ENCODE measurements at regions of chr7 and their contacts with region 1.

Region 1: DNA sequence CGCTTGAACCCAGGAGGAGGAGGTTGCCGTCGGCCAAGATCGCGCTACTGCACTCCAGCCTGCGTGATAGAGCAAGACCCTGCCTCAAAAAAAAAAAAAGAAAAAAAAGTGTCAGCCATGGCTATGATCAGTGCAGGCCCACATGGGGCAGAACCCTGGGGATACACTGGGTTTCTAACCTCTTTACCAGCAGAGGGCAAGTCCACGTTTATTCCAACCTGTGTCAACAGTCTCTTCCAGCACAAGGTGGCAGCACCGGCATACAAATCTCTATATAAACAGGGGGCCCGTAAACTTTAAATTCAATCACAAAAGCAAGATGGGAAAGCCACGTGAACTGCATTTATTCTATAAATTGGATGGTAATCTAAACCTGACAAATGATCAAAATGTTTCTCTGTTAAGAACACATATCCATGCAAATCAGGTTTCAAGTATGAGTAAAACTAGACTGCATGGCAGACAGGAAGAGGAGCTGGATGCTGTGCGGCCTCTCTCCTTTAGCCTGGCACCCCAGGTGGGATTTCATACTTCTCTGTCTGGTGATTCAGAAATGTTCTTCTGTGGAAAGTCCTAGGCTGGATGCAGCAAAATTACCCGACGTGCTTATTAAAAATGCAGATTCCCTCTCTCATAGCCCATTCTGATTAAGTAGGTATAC is 60.0 kb upstream of the STEAP1B start:
- DNase-seq: peak; percentile 50 to 61
- ATAC-seq: peak; percentile 67 to 68
- H3K4me3 ChIP-seq: no peak overlapping the region
- H3K27ac ChIP-seq: no peak overlapping the region
- H3K4me1 ChIP-seq: peaks cover 23 to 38% of the 10 kb centered on the region in 2 donors
- H3K27me3 ChIP-seq: no peaks in the 10 kb centered on the region
- CTCF ChIP-seq: peak; percentile 81 to 90 (median 88)
- POLR2A ChIP-seq: no peak

Region 2: GRCh38 chr7:22577396-22578001 is 17.5 kb after region 1 on chr7:
- in situ Hi-C with region 1: no loop called
- intact Hi-C with region 1: loop called (anchors 2 kb)
- DNase-seq: peak; percentile 52 to 59
- ATAC-seq: peak; percentile 99 to 100
- H3K4me3 ChIP-seq: no peak overlapping the region
- H3K27ac ChIP-seq: peak overlapping the region; percentile 54 to 66 (median 58)
- H3K4me1 ChIP-seq: peaks cover 15 to 19% of the 10 kb centered on the region in 2 donors
- H3K27me3 ChIP-seq: no peaks in the 10 kb centered on the region
- CTCF ChIP-seq: no peak
- POLR2A ChIP-seq: no peak

Region 3: GRCh38 chr7:22732556-22733126 is 172.7 kb after region 1 on chr7:
- in situ Hi-C with region 1: loop called in 3 of 4 experiments (anchors 5 to 10 kb)
- intact Hi-C with region 1: no loop called
- DNase-seq: no peak
- ATAC-seq: no peak
- H3K4me3 ChIP-seq: no peak overlapping the region
- H3K27ac ChIP-seq: no peak overlapping the region
- H3K4me1 ChIP-seq: peaks cover 2 to 7% of the 10 kb centered on the region in 2 donors
- H3K27me3 ChIP-seq: no peaks in the 10 kb centered on the region
- CTCF ChIP-seq: peak in 1 of 5 experiments; percentile 32
- POLR2A ChIP-seq: no peak

Region 4: GRCh38 chr7:22854158-22855048 is 294.4 kb after region 1 on chr7:
- in situ Hi-C with region 1: no loop called
- intact Hi-C with region 1: loop called (anchors 5 kb)
- DNase-seq: peak; percentile 90 to 96
- ATAC-seq: peak; percentile 64 to 68
- H3K4me3 ChIP-seq: peak overlapping the region; percentile 71 to 86 (median 80)
- H3K27ac ChIP-seq: peak overlapping the region; percentile 94 to 99 (median 98)
- H3K4me1 ChIP-seq: peaks cover 36 to 46% of the 10 kb centered on the region in 2 donors
- H3K27me3 ChIP-seq: no peaks in the 10 kb centered on the region
- CTCF ChIP-seq: peak in 3 of 5 experiments; percentile 4 to 79 (median 70)
- POLR2A ChIP-seq: peak; percentile 87 to 90

Region 5: GRCh38 chr7:23181684-23182553 is 622.0 kb after region 1 on chr7 and contains the start of gene NUP42:
- in situ Hi-C with region 1: no loop called
- intact Hi-C with region 1: loop called (anchors 5 kb)
- DNase-seq: peak; percentile 91 to 95
- ATAC-seq: peak; percentile 97 to 98
- H3K4me3 ChIP-seq: peak within 1 kb of the TSS; percentile 71 to 96 (median 86)
- H3K27ac ChIP-seq: peak within 1 kb of the TSS; percentile 83 to 94 (median 89)
- H3K4me1 ChIP-seq: peaks cover 22 to 24% of the 10 kb centered on the region in 2 donors
- H3K27me3 ChIP-seq: no peaks in the 10 kb centered on the region
- CTCF ChIP-seq: no peak
- POLR2A ChIP-seq: peak; percentile 51 to 52
- total RNA-seq, gene NUP42: 10.0 to 38.6 (median 15.6) TPM

Measured in gastrocnemius medialis (tissue), 4 donors.